GM12878 (cell line): ENCODE measurements at regions of chr11 and their contacts with region 1.

Region 1: DNA sequence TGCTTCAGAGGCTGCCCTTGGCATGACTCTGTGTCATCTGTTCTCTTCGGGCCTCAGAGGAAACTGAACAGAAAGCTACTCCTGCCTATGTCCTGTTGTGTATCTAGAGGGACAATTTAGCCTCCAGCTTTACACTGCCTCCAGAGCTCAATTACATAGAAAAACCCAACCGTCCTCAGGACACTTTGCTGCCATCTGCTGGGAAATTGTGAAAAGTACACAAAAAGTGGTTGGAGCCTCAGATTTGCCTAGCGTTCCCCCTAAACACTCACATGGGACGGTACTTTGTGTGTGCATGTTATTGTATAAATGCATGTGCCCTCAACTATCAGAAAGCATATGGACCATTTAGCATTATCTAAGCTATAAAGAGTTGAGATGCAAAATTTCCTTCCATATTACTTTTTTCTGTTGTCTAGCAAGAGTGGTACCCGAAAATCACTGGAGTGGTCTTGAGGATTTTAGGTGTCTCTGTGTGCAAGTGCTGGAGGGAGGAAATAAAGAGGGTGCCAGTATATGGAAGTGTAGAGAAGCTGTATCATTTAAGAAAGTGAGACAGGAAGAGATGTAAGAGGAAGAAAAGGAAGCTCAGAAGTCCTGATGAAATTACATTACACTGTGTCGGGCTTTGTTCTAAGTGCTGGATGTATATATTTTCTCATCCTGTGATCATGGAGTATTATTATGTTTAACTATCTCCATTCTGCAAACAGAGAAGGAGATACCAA is 8.7 kb upstream of the MS4A4E start:
- DNase-seq: peak; percentile 59
- ATAC-seq: peak; percentile 96
- H3K4me3 ChIP-seq: no peak overlapping the region
- H3K27ac ChIP-seq: no peak overlapping the region
- H3K4me1 ChIP-seq: no peaks in the 10 kb centered on the region
- H3K27me3 ChIP-seq: no peaks in the 10 kb centered on the region
- CTCF ChIP-seq: peak; percentile 63 to 78 (median 68)
- EP300 ChIP-seq: no peak
- POLR2A ChIP-seq: no peak
- RAD21 ChIP-seq: peak; percentile 99

Region 2: DNA sequence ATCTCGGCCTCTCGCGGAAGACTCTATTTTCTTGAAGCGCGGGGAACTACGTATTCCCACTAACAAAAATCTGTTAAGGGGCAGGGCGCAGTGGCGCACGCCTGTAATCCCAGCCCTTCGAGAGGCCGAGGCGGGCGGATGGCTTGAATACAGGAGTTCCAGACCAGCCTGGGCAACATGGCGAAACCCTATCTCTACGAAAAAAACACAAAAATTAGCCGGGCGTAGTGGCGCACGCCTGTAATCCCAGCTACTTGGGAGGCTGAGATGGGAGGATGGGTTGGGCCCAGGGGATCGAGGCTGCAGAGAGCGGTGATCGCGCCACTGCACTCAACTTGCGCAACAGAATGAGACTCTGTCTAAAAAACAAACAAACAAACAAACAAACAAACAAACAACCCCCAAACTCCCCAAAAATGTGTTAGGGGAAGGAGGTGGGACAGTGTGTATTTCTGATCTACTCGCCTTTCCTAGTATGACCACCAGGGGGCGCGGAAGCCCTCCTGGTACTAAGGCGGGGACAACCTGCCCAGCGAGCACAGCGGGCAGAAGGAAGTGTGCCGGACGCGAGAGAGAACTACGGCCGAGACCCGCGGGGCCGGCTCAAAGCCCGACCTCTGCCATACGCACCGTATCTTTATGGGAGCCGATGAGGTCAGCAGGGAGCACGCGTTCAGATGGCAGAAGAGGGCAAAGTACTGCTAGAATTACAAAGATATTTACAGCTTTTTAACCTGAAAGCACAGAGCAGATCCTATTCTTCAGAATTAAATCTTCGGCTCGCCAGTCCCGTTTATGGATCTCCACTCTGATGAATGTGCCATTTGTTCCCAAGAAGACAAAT is 497.8 kb before region 1 on chr11:
- CTCF ChIA-PET with region 1: interaction called, 17 read pairs
- POLR2A ChIA-PET with region 1: no interaction called
- RAD21 ChIA-PET with region 1: interaction called, 20 read pairs
- SMC1A ChIA-PET with region 1: interaction called, 9 read pairs
- in situ Hi-C with region 1: loop called (anchors 10 kb)
- intact Hi-C with region 1: loop called (anchors 1 kb)
- DNase-seq: peak; percentile 50
- ATAC-seq: peak; percentile 88
- H3K4me3 ChIP-seq: peak overlapping the region; percentile 97
- H3K27ac ChIP-seq: no peak overlapping the region
- H3K4me1 ChIP-seq: peaks cover 4% of the 10 kb centered on the region
- H3K27me3 ChIP-seq: peaks cover 0 to 3% of the 10 kb centered on the region in 2 experiments; a peak in 1 of 4 replicates
- CTCF ChIP-seq: peak; percentile 81 to 89 (median 85)
- EP300 ChIP-seq: no peak
- POLR2A ChIP-seq: no peak
- RAD21 ChIP-seq: peak; percentile 79

Region 3: DNA sequence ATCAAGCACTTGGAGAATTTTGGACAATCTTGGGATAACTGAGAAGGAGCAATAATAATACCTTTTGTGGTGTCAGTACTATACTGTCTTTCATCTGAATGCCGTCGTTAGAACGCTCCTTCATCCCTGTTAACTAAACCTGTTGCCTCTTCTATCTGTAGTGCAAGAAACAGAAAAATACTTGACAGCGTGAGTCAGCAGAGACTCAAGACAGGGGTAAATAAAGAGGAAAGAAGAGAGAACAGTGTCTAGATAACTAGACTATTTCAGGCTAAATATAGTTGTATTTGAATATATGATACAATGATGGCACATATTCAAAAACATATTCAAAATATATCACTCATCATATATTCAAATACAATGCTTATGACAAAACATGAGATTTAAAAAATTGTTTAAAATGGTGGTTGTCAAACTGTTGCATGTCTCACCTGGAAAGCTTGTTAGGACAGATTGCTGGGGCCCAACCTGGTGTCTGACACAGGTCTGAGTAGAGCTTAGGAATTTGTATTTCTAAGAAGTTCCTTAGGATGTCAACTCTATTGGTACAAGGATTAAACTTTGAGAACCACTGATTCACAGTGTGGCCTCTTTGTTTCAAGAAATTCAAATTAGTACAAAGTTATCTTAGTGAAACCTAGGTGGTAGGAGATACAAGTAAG is 270.4 kb before region 1 on chr11:
- CTCF ChIA-PET with region 1: interaction called, 3 read pairs
- POLR2A ChIA-PET with region 1: no interaction called
- RAD21 ChIA-PET with region 1: no interaction called
- SMC1A ChIA-PET with region 1: no interaction called
- in situ Hi-C with region 1: no loop called
- intact Hi-C with region 1: loop called (anchors 10 kb)
- DNase-seq: no peak
- ATAC-seq: no peak
- H3K4me3 ChIP-seq: no peak overlapping the region
- H3K27ac ChIP-seq: no peak overlapping the region
- H3K4me1 ChIP-seq: no peaks in the 10 kb centered on the region
- H3K27me3 ChIP-seq: no peaks in the 10 kb centered on the region; a peak in 1 of 4 replicates
- CTCF ChIP-seq: no peak
- EP300 ChIP-seq: no peak
- POLR2A ChIP-seq: no peak
- RAD21 ChIP-seq: no peak

Region 4: DNA sequence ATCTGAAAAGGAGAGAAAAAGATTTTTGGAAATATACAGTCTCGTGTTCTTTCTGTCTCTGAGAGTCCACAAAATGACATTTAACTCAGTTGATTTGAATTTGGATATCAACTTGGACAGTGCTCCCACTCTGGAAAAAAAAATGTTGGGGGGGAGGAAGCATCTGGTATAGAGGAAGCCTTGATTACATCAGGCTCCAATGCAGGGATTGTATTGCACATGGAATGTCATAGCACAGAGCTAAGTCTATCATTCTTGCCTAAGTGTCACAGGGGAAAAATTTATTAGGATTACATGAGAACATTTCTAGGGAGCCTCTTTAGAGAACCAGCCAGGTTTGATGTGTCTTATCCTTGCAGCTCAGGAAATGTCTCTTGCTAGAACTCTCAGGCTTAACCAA is 91.8 kb before region 1 on chr11:
- CTCF ChIA-PET with region 1: interaction called, 12 read pairs
- POLR2A ChIA-PET with region 1: no interaction called
- RAD21 ChIA-PET with region 1: interaction called, 3 read pairs
- SMC1A ChIA-PET with region 1: interaction called, 7 read pairs
- in situ Hi-C with region 1: no loop called
- intact Hi-C with region 1: no loop called
- DNase-seq: no peak
- ATAC-seq: no peak
- H3K4me3 ChIP-seq: no peak overlapping the region
- H3K27ac ChIP-seq: no peak overlapping the region
- H3K4me1 ChIP-seq: no peaks in the 10 kb centered on the region
- H3K27me3 ChIP-seq: no peaks in the 10 kb centered on the region; a peak in 1 of 4 replicates
- CTCF ChIP-seq: no peak
- EP300 ChIP-seq: no peak
- POLR2A ChIP-seq: no peak
- RAD21 ChIP-seq: no peak

Region 5: DNA sequence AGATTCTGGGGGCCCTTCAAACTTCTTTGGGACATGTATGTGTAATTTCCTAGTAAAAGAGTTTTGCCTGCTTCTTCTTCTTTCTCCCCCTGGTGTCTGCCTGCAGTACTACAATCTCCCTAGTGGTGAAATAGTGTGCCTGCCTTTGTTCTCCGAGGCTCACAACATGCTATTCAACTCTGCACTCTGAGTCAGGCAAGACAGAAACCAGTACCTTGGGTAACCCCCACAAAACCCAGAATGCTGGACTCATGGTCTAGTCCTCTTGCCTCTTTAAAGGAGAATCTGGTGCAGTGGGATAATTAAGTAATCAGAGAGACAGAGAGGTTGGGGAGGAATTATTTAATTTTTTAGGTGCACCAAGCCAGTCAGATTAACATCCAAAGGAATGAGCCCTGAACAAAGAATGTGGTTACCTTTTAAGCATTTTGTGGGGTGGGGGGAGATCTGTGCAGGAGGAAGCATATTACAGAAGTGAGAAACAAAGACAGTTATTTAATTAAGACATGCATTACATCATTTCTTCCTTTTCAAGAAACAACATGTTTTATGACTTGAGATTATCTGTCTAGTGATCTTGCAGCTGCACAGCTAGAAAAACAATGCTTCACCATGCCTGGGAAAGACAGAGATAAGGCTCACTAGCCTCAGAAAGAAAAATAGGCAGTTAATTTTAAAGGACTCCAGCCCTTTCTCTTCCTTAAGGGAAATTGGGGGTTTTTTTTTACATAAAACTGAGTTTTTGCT is 57.8 kb before region 1 on chr11:
- CTCF ChIA-PET with region 1: interaction called, 25 read pairs
- POLR2A ChIA-PET with region 1: interaction called, 5 read pairs
- RAD21 ChIA-PET with region 1: interaction called, 27 read pairs
- SMC1A ChIA-PET with region 1: interaction called, 29 read pairs
- in situ Hi-C with region 1: no loop called
- intact Hi-C with region 1: loop called (anchors 1 kb)
- DNase-seq: peak; percentile 80
- ATAC-seq: peak; percentile 99
- H3K4me3 ChIP-seq: 0 out of 2 replicates have a peak overlapping the region, but pooled peaks have one; percentile 28
- H3K27ac ChIP-seq: peak overlapping the region; percentile 70
- H3K4me1 ChIP-seq: peaks cover 24% of the 10 kb centered on the region
- H3K27me3 ChIP-seq: no peaks in the 10 kb centered on the region
- CTCF ChIP-seq: peak; percentile 82 to 96 (median 94)
- EP300 ChIP-seq: peak; percentile 40 to 47; a peak in 2 of 4 replicates
- POLR2A ChIP-seq: no peak
- RAD21 ChIP-seq: peak; percentile 76

Region 6: GRCh38 chr11:60265373-60266214 is 13.9 kb after region 1 on chr11:
- CTCF ChIA-PET with region 1: interaction called, 32 read pairs
- POLR2A ChIA-PET with region 1: no interaction called
- RAD21 ChIA-PET with region 1: interaction called, 11 read pairs
- SMC1A ChIA-PET with region 1: interaction called, 12 read pairs
- in situ Hi-C with region 1: no loop called
- intact Hi-C with region 1: no loop called
- DNase-seq: peak; percentile 44
- ATAC-seq: peak; percentile 76
- H3K4me3 ChIP-seq: no peak overlapping the region
- H3K27ac ChIP-seq: no peak overlapping the region
- H3K4me1 ChIP-seq: no peaks in the 10 kb centered on the region
- H3K27me3 ChIP-seq: no peaks in the 10 kb centered on the region
- CTCF ChIP-seq: peak; percentile 49 to 80 (median 74); a peak in 5 of 6 replicates
- EP300 ChIP-seq: no peak
- POLR2A ChIP-seq: no peak
- RAD21 ChIP-seq: peak; percentile 96